HepG2 (cell line): ENCODE measurements at regions of chr10 and their contacts with region 1.

Region 1: GRCh38 chr10:91797874-91798648 is at the start of gene TNKS2:
- DNase-seq: peak; percentile 87
- ATAC-seq: peak; percentile 91
- H3K4me3 ChIP-seq: peak within 1 kb of the TSS; percentile 86 to 90 (median 87)
- H3K27ac ChIP-seq: peak within 1 kb of the TSS; percentile 90
- H3K4me1 ChIP-seq: peaks cover 55% of the 10 kb centered on the region
- H3K27me3 ChIP-seq: no peaks in the 10 kb centered on the region; a peak in 1 of 5 replicates
- CTCF ChIP-seq: no peak
- EP300 ChIP-seq: no peak; a peak in 1 of 4 replicates
- POLR2A ChIP-seq: peak; percentile 86
- RAD21 ChIP-seq: peak; percentile 52; the same call in 1 of the 2 replicates
- total RNA-seq, gene TNKS2: 15.2 and 25.5 TPM in 2 replicates

Region 2: DNA sequence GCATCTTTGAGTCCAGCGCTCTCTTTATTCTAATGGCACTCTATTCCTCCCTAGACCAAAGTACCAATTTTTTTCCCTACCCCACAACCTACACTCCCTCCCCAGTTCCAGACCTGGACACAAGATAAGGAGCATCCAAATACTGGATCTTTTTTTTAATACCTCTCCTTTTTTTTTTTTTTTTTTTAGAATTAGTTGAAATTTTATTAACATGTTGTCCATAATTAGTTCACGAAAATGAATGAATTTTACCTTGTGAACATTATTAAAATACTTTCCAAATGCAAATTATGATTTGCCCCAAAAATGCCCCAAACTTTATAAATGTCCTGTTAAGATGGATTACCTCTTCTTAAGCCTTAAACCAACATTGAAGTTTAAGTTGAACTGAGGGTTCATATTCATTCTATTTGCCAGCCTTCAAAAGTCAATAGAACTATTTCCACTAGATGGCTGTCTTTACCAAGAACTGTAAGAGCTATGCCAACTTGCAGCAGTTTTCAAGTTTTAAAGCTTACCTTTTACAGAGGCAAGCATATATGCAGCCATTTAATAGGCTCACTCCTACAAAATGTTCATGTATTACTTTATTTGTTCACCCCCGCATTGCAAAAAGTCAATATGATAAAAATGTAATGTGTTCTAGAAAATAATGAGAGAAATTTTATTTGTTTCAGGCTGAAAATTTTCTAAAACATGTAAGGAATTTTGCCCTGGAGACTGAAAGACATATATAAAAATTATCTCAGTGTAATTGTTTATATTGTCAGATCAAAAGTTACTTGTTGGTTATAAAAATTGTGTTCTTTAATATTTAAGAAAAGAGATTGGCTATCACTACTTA is 39.5 kb before region 1 on chr10:
- CTCF ChIA-PET with region 1: no interaction called
- POLR2A ChIA-PET with region 1: no interaction called
- in situ Hi-C with region 1: no loop called
- intact Hi-C with region 1: no loop called
- DNase-seq: peak; percentile 72
- ATAC-seq: peak; percentile 71
- H3K4me3 ChIP-seq: no peak overlapping the region
- H3K27ac ChIP-seq: no peak overlapping the region
- H3K4me1 ChIP-seq: no peaks in the 10 kb centered on the region
- H3K27me3 ChIP-seq: no peaks in the 10 kb centered on the region; a peak in 1 of 5 replicates
- CTCF ChIP-seq: peak; percentile 80
- EP300 ChIP-seq: no peak
- POLR2A ChIP-seq: no peak
- RAD21 ChIP-seq: peak; percentile 77

Region 3: DNA sequence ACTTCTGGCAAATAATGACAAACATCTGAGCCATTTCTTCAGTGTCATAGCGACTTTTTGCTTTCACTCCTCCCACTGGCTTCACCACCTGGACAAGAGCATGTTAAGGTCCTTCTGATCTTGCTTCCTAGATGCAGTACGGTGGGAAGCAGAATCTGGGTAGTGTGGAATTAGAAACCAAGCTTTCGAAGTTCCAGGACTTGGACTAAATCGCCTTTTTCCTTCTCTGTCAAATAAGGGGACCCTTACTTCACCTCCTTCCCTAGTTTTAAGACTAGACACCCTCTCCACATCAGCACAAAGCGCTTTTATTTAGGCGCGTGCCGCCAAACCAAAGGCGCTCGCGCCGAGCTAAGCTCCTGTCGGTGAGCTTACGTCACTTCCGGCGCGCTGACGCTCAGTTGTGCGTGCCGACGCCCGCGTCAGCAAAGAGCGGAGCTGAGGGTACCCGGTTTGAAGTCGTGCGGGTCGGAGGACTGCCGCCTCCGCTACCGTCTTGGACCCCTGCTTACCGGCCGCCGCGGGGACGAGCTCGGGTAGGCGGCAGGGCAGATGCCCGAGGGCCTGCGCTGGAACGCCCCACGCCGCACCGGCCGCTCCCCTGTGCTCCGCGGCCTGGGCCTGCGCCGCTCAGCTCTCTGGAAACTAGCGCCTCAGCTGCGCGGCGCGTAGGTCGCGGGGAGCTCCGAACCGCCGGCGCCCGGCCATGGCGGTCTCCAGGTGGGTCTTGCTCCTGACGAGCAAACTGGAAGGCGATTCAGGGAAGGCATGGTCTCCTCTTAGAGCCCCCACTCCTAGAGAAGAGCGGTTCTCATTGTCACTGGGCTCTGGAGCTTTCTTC is 125.5 kb after region 1 on chr10 and contains the start of gene BTAF1:
- CTCF ChIA-PET with region 1: no interaction called
- POLR2A ChIA-PET with region 1: interaction called, 11 read pairs
- in situ Hi-C with region 1: no loop called
- intact Hi-C with region 1: no loop called
- DNase-seq: peak; percentile 85
- ATAC-seq: peak; percentile 97
- H3K4me3 ChIP-seq: peak within 1 kb of the TSS; percentile 68 to 96 (median 76)
- H3K27ac ChIP-seq: peak within 1 kb of the TSS; percentile 86
- H3K4me1 ChIP-seq: peaks cover 56% of the 10 kb centered on the region
- H3K27me3 ChIP-seq: no peaks in the 10 kb centered on the region; a peak in 1 of 5 replicates
- CTCF ChIP-seq: no peak; the same call in 1 of the 2 replicates
- EP300 ChIP-seq: 0 out of 4 replicates have a peak, but pooled peaks of 1 of the 2 experiments have one; percentile 33
- POLR2A ChIP-seq: peak; percentile 93 to 96
- RAD21 ChIP-seq: no peak
- total RNA-seq, gene BTAF1: 31.6 and 38.6 TPM in 2 replicates